ENCODE measurements at regions of chr5 and their contacts with region 1.

Region 1: DNA sequence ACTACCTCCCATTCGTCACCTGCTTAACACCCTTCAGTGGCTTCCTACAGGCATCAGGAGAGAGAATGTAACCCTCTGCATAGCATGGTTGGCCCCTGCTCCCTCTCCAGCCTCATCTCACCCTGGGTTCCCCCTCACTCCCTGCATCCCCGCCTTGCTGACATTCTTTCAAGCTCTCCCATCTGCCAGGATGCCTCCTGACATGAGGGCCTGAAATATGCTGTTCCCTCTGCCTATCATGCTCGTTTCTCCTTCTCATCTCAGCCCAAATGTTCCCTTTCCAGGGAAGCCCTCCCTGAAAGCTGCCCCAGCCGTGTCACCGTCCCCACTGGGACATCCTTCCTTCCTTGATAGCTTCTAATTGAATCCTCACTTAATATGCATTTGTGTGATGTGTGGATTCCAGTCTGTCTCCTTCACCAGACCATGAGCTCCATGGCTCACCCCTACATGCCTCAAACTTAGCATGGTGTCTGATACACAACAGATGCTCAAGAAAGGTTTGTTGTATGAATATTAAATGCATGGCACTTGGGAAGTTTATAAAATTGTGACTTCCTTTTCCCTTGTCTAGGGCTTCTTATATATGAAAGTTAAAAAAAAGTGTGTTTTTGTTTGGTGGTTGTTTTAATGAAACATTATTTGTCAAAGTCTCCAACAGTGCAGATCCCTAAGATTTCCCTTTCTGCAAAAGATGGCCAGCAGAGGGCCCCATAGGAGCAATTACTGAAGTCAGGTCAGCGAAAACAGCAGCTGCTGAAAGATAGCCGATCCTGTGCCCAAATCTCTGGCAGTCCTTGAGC is 7.3 kb upstream of the C5orf58 start:
- DNase-seq: peak; percentile 62 to 86
- ATAC-seq: peak; percentile 75 to 79 (median 77)
- H3K4me3 ChIP-seq: no peak overlapping the region
- H3K4me3 Mint-ChIP-seq: no peak overlapping the region
- H3K27ac ChIP-seq: no peak overlapping the region
- H3K27ac Mint-ChIP-seq: no peak overlapping the region
- H3K4me1 ChIP-seq: peaks cover 2% of the 10 kb centered on the region
- H3K4me1 Mint-ChIP-seq: peaks cover 7 to 8% of the 10 kb centered on the region in 2 donors
- H3K27me3 ChIP-seq: no peaks in the 10 kb centered on the region
- H3K27me3 Mint-ChIP-seq: no peaks in the 10 kb centered on the region
- CTCF ChIP-seq: peak; percentile 88

Region 2: GRCh38 chr5:170338933-170339779 is 113.6 kb after region 1 on chr5:
- intact Hi-C with region 1: loop called (anchors 1 kb)
- DNase-seq: peak; percentile 49 to 89
- ATAC-seq: peak; percentile 80 to 94 (median 84)
- H3K4me3 ChIP-seq: no peak overlapping the region
- H3K4me3 Mint-ChIP-seq: no peak overlapping the region
- H3K27ac ChIP-seq: no peak overlapping the region
- H3K27ac Mint-ChIP-seq: peak overlapping the region in 1 of 2 donors; percentile 29
- H3K4me1 ChIP-seq: peaks cover 39% of the 10 kb centered on the region
- H3K4me1 Mint-ChIP-seq: peaks cover 10 to 21% of the 10 kb centered on the region in 2 donors
- H3K27me3 ChIP-seq: no peaks in the 10 kb centered on the region
- H3K27me3 Mint-ChIP-seq: no peaks in the 10 kb centered on the region
- CTCF ChIP-seq: peak; percentile 86

Region 3: GRCh38 chr5:170420780-170421412 is 195.4 kb after region 1 on chr5:
- intact Hi-C with region 1: loop called (anchors 1 kb)
- DNase-seq: peak; percentile 35 to 82
- ATAC-seq: peak; percentile 42 to 73 (median 68)
- H3K4me3 ChIP-seq: no peak overlapping the region
- H3K4me3 Mint-ChIP-seq: no peak overlapping the region
- H3K27ac ChIP-seq: no peak overlapping the region
- H3K27ac Mint-ChIP-seq: no peak overlapping the region
- H3K4me1 ChIP-seq: peaks cover 4% of the 10 kb centered on the region
- H3K4me1 Mint-ChIP-seq: peaks cover 0 to 5% of the 10 kb centered on the region in 2 donors
- H3K27me3 ChIP-seq: no peaks in the 10 kb centered on the region
- H3K27me3 Mint-ChIP-seq: peaks cover 14 to 16% of the 10 kb centered on the region in 2 donors
- CTCF ChIP-seq: peak; percentile 74

Region 4: DNA sequence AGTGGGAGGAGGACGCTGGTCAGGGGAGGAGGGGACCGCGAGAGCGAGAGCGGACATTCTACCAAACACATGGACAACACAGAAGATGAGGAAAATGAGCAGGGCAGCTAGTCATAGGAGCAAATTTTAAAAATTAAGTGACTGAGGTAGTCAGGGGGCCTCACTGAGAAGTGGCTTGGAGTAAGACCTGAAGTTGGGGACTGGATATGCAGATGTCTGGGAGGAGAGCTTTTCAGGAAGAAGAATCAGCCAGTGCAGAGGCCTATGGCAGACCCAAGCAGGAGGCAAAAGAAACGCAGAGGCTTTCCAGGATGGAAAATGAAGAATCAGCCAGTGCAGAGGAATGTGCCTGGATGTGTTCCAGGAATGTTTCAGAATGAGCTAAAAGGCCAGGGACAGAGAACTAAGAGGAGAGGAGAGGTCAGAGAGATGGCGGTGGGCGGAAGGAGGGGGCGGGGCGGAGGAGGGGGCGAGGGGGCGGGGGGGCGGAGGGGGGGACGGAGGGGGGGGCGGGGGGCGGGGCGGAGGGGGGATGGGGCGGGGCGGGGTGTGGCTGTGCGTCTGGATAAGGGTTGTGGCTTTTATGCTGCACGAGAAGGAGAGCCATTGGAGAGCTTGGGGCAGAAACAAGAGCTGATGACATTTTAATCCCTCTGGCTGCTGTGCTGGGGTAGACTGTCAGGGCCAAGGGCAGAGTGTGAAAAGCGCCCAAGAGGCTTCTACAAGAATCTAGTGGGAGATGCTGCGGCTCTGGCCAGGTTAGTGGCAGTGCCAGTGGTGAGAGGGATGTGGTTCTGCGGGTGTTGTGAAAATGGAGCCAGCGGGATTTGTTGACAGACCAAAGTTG is 407.9 kb after region 1 on chr5:
- intact Hi-C with region 1: loop called (anchors 5 kb)
- DNase-seq: no peak
- ATAC-seq: peak in 1 of 3 donors; percentile 43
- H3K4me3 ChIP-seq: no peak overlapping the region
- H3K4me3 Mint-ChIP-seq: peak overlapping the region; percentile 79
- H3K27ac ChIP-seq: no peak overlapping the region
- H3K27ac Mint-ChIP-seq: peak overlapping the region in 1 of 2 donors; percentile 79
- H3K4me1 ChIP-seq: peaks cover 16% of the 10 kb centered on the region
- H3K4me1 Mint-ChIP-seq: peaks cover 21 to 22% of the 10 kb centered on the region in 2 donors
- H3K27me3 ChIP-seq: no peaks in the 10 kb centered on the region
- H3K27me3 Mint-ChIP-seq: peaks cover 7 to 24% of the 10 kb centered on the region in 2 donors
- CTCF ChIP-seq: peak; percentile 26